Mammary epithelial cell (primary cell): ENCODE measurements at regions of chr6 and their contacts with region 1.

Region 1: DNA sequence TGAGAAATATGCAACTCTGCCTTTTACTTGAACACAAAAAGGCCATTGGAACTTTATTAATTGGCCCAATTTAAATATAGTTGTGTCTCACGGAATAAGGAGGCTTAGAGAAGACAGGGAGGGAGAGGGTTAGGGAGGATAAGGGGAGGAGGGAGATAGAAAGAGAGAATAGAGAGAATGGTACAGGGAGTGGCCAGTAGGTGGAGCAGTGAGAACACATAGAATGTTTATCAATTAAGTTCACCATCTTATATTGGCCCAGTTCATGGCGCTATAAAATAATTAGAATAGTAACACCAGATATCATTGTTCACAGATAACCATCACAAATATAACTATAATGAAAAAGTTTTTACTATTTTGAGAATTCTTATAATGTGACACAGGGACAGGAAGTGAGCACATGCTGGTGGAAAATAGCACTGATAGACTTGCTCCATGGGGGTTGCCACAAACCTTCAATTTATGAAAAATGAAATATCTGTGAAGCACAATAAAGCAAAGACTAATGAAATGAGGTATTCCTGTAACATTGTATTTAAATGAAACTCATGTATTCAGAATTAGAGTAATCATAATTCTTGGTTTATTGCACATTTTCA is 374.1 kb upstream of the MANEA start:
- DNase-seq: peak; percentile 19
- H3K4me3 ChIP-seq: no peak overlapping the region
- H3K27ac ChIP-seq: no peak overlapping the region
- H3K4me1 ChIP-seq: no peaks in the 10 kb centered on the region
- H3K27me3 ChIP-seq: no peaks in the 10 kb centered on the region
- CTCF ChIP-seq: peak; percentile 66 to 80

Region 2: DNA sequence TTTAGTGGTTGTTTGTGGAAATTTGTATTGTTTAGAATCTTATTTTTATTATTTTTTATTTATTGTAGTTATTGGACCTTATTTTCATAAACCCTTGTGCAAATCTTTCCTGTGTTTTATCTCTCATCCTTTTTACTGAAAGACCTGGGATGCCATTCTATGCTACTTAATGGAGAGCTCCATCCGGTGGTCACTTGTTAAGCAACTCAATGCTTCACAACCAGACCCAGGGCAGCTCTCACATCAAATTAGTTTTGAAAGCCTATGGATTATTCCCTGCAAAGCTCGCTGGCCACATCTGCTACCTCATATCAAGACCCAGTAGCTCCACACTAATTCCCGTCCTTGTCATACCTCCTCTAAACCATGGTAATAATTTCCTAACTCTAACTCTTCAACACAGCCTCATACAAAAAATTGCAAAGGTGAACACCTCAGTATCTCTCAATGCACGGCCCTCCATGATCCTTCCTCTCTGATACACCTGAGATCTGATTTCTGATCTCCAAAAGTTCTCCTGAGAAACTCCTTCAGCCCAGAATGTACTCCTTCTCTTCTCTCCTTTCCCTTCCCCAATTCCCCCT is 77.5 kb after region 1 on chr6:
- CTCF ChIA-PET with region 1: interaction called, 3 read pairs
- dilution Hi-C with region 1: no loop called
- in situ Hi-C with region 1: no loop called
- intact Hi-C with region 1: loop called (anchors 1 kb)
- DNase-seq: no peak
- H3K4me3 ChIP-seq: no peak overlapping the region
- H3K27ac ChIP-seq: no peak overlapping the region
- H3K4me1 ChIP-seq: no peaks in the 10 kb centered on the region
- H3K27me3 ChIP-seq: peaks cover 3% of the 10 kb centered on the region
- CTCF ChIP-seq: peak; percentile 39 to 73

Region 3: GRCh38 chr6:95352064-95352795 is 149.0 kb after region 1 on chr6:
- CTCF ChIA-PET with region 1: no interaction called
- dilution Hi-C with region 1: no loop called
- in situ Hi-C with region 1: no loop called
- intact Hi-C with region 1: loop called (anchors 1 kb)
- DNase-seq: no peak
- H3K4me3 ChIP-seq: no peak overlapping the region
- H3K27ac ChIP-seq: no peak overlapping the region
- H3K4me1 ChIP-seq: no peaks in the 10 kb centered on the region
- H3K27me3 ChIP-seq: no peaks in the 10 kb centered on the region
- CTCF ChIP-seq: peak; percentile 6 to 44